ENCODE measurements at regions of chr18 and their contacts with region 1.

Region 1: GRCh38 chr18:23131693-23132319 is 3.5 kb upstream of the CABLES1 start:
- DNase-seq: peak; percentile 57 to 86
- H3K4me3 ChIP-seq: no peak overlapping the region
- H3K27ac ChIP-seq: peak overlapping the region in 1 of 2 donors; percentile 3
- H3K4me1 ChIP-seq: peaks cover 0 to 4% of the 10 kb centered on the region in 2 donors
- H3K27me3 ChIP-seq: no peaks in the 10 kb centered on the region
- CTCF ChIP-seq: peak; percentile 76 to 88 (median 83)
- POLR2A ChIP-seq: no peak

Region 2: GRCh38 chr18:23077493-23078256 is 54.1 kb before region 1 on chr18:
- intact Hi-C with region 1: no loop called
- DNase-seq: no peak
- H3K4me3 ChIP-seq: no peak overlapping the region
- H3K27ac ChIP-seq: no peak overlapping the region
- H3K4me1 ChIP-seq: no peaks in the 10 kb centered on the region
- H3K27me3 ChIP-seq: no peaks in the 10 kb centered on the region
- CTCF ChIP-seq: no peak
- POLR2A ChIP-seq: no peak

Region 3: GRCh38 chr18:23231340-23232021 is 99.7 kb after region 1 on chr18:
- intact Hi-C with region 1: loop called (anchors 10 kb)
- DNase-seq: peak; percentile 64 to 72
- H3K4me3 ChIP-seq: no peak overlapping the region
- H3K27ac ChIP-seq: peak overlapping the region; percentile 84 to 95
- H3K4me1 ChIP-seq: peaks cover 12 to 14% of the 10 kb centered on the region in 2 donors
- H3K27me3 ChIP-seq: no peaks in the 10 kb centered on the region
- CTCF ChIP-seq: no peak
- POLR2A ChIP-seq: no peak

Region 4: DNA sequence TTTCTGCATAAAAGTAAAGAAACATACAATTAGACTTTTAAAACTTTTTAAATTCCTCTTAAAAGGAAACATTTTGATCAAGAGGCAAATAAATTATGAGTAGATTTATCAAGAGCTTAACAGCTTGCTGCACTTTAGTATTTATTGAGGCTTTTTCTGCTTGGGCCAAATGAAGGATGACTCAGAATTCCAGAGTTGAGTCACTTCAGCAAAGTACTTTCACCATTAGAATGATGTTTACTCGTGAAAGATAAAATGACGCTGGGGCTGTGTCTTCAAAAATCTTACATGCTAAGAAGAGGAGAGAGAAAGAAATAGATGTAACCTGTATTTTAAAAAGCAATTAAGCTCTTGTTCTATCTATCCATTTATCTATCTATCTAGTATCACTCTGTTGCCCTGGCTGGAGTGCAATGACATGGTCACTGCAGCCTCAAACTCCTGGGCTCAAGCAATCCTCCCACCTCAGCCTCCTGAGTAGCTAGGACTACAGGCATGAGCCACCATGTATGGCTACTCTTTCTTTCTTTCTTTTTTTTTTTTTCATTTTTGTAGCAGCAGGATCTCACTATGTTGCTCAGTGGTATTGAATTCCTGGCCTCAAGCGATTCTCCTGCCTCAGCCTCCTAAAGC is 246.0 kb after region 1 on chr18:
- intact Hi-C with region 1: loop called (anchors 10 kb)
- DNase-seq: peak in 1 of 2 donors; percentile 51
- H3K4me3 ChIP-seq: no peak overlapping the region
- H3K27ac ChIP-seq: peak overlapping the region; percentile 93 to 98
- H3K4me1 ChIP-seq: peaks cover 4% of the 10 kb centered on the region in 2 donors
- H3K27me3 ChIP-seq: no peaks in the 10 kb centered on the region
- CTCF ChIP-seq: no peak
- POLR2A ChIP-seq: no peak

Measured in uterus (tissue), 4 donors.